HCT116 (cell line): ENCODE measurements at regions of chr3 and their contacts with region 1.

Region 1: DNA sequence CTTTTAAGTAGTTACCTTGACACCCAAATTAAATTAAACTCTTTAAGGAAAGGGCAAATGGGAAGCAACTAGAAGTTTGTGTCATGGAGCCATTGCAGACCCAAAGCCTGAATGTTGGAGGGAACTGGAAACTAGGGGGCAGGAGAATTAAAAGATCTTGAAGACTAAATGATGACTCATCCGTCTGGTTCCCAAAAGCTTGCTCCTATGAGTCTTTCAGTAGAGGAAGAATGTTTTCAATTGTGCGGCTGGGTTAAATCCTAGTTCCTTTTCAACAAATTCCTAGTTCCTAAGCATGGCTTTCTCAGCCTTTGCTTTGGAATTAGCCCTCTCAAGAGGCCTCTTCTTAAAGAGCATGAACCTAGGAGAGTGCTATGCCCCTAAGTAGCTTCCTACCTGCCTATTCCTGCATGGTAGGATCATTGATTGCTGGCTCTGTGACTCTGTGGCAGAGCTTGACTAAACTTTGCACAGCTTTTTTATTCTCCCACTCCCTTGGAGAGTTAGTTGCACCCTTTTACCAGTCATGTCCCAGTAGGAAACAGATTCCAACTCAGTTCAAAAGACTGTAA is 17.7 kb downstream of the CLEC3B start:
- DNase-seq: no peak
- ATAC-seq: peak; percentile 26; the same call in 1 of the 2 replicates
- H3K4me3 ChIP-seq: no peak overlapping the region
- H3K27ac ChIP-seq: no peak overlapping the region
- H3K4me1 ChIP-seq: peaks cover 8 to 20% of the 10 kb centered on the region in 2 experiments; a peak in 3 of 4 replicates
- H3K27me3 ChIP-seq: no peaks in the 10 kb centered on the region
- CTCF ChIP-seq: 0 out of 6 replicates have a peak, but pooled peaks of 1 of the 3 experiments have one; percentile 38
- POLR2A ChIP-seq: no peak
- RAD21 ChIP-seq: peak; percentile 66

Region 2: GRCh38 chr3:44803298-44803697 is 240.5 kb before region 1 on chr3:
- CTCF ChIA-PET with region 1: no interaction called
- POLR2A ChIA-PET with region 1: no interaction called
- RAD21 ChIA-PET with region 1: no interaction called
- intact Hi-C with region 1: no loop called
- DNase-seq: no peak
- ATAC-seq: no peak
- H3K4me3 ChIP-seq: no peak overlapping the region
- H3K27ac ChIP-seq: no peak overlapping the region
- H3K4me1 ChIP-seq: no peaks in the 10 kb centered on the region
- H3K27me3 ChIP-seq: no peaks in the 10 kb centered on the region
- CTCF ChIP-seq: no peak
- POLR2A ChIP-seq: no peak
- RAD21 ChIP-seq: no peak

Region 3: DNA sequence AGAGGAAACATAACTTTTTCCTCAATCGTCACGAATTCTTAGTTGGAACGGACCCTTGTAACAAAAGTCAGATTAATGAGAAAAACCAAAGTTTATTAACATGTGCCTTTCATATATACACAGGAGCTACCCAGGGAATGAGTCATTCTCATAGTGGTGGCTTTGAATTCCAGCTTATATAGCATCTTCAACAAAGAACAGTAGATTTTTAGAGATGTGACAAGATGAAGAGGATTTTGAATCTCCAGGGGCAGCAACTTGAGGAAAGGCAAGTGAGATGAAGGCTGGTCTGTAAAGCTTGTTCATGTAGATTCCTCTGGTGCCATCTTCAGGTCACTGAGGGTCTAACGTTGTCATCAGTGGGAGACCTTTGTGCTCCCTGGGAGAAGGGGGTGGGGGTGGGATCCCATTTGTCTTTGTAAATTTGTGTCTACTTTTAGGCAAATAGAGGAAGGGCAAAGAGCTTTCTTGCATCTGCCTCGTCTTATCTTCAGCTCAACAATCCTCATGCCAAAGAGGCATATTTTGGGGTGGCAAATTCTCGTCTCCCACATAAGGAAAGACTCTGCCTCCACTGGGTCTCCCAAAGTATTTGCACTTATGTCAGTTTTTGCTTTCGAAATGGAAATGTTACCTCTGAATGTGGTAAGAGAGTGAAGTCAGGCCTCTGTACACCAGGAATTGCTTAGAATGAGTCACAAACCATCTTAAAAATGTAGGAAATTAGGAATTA is 11.8 kb after region 1 on chr3:
- CTCF ChIA-PET with region 1: interaction called, 28 read pairs
- POLR2A ChIA-PET with region 1: interaction called, 3 read pairs
- RAD21 ChIA-PET with region 1: interaction called in 1 of 2 experiments, 3 read pairs
- intact Hi-C with region 1: no loop called
- DNase-seq: no peak
- ATAC-seq: peak; percentile 82
- H3K4me3 ChIP-seq: no peak overlapping the region
- H3K27ac ChIP-seq: no peak overlapping the region
- H3K4me1 ChIP-seq: peaks cover 30 to 49% of the 10 kb centered on the region in 2 experiments; a peak in 3 of 4 replicates
- H3K27me3 ChIP-seq: no peaks in the 10 kb centered on the region
- CTCF ChIP-seq: peak; percentile 6 to 42 (median 35); a peak in 3 of 6 replicates
- POLR2A ChIP-seq: no peak
- RAD21 ChIP-seq: peak; percentile 43

Region 4: GRCh38 chr3:45499529-45499928 is 455.7 kb after region 1 on chr3:
- CTCF ChIA-PET with region 1: interaction called, 19 read pairs
- POLR2A ChIA-PET with region 1: no interaction called
- RAD21 ChIA-PET with region 1: interaction called in 1 of 2 experiments, 3 read pairs
- intact Hi-C with region 1: no loop called
- DNase-seq: peak; percentile 19
- ATAC-seq: no peak
- H3K4me3 ChIP-seq: no peak overlapping the region
- H3K27ac ChIP-seq: no peak overlapping the region
- H3K4me1 ChIP-seq: no peaks in the 10 kb centered on the region
- H3K27me3 ChIP-seq: no peaks in the 10 kb centered on the region
- CTCF ChIP-seq: peak in 2 of 3 experiments; percentile 24 to 82; a peak in 3 of 6 replicates
- POLR2A ChIP-seq: no peak
- RAD21 ChIP-seq: peak; percentile 79